A549 (cell line): ENCODE measurements at regions of chr1 and their contacts with region 1.

Region 1: GRCh38 chr1:67500413-67500959 is 70.3 kb upstream of the SERBP1 start:
- DNase-seq: peak; percentile 81
- ATAC-seq: peak; percentile 99 to 100
- H3K4me3 ChIP-seq: no peak overlapping the region
- H3K27ac ChIP-seq: no peak overlapping the region; a peak in 1 of 6 replicates
- H3K4me1 ChIP-seq: no peaks in the 10 kb centered on the region
- CTCF ChIP-seq: peak; percentile 85
- EP300 ChIP-seq: no peak
- POLR2A ChIP-seq: no peak
- RAD21 ChIP-seq: peak; percentile 92 to 95

Region 2: GRCh38 chr1:67214420-67215174 is 285.9 kb before region 1 on chr1:
- CTCF ChIA-PET with region 1: interaction called, 49 read pairs
- POLR2A ChIA-PET with region 1: no interaction called
- DNase-seq: peak in 1 of 2 experiments; percentile 24
- ATAC-seq: peak in 1 of 2 experiments; percentile 75; a peak in 3 of 6 replicates
- H3K4me3 ChIP-seq: no peak overlapping the region
- H3K27ac ChIP-seq: no peak overlapping the region
- H3K4me1 ChIP-seq: no peaks in the 10 kb centered on the region
- CTCF ChIP-seq: peak; percentile 48
- EP300 ChIP-seq: no peak
- POLR2A ChIP-seq: no peak
- RAD21 ChIP-seq: 0 out of 5 replicates have a peak, but pooled peaks of 1 of the 2 experiments have one; percentile 15

Region 3: DNA sequence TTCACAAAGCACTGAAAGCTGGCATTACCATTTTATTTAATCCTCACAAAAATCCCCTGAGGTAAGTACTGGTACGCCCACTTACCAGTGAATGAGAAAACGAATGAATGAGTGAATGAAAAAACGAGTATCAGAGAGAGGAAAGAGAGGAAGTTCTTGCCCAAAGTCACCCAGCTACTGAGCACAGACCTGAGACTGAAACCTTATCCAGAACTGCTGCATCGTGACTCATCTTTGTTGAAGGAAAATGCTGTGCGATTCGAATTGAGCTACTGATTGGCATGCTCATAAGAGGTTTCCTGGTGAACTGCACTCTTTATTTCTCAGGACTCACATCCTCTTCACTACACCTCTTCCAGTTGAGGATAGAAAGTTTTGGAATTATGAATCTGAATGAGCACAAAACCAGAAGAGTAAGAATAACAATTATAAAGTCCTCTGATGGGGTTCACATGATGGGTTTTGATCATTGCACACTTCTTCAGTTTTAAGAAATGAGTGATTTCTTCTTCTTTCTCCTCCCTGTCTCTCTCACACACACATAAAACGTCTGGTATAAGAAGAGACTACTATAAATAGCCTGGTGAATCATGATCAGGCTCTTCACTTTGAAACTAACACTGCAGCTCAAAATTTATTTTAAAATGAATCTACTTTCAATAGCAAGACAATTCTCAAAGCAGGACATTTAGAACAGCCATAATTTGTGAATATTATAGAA is 160.7 kb before region 1 on chr1:
- CTCF ChIA-PET with region 1: interaction called, 36 read pairs
- POLR2A ChIA-PET with region 1: no interaction called
- DNase-seq: peak in 1 of 2 experiments; percentile 3
- ATAC-seq: peak; percentile 39 to 40; a peak in 2 of 6 replicates
- H3K4me3 ChIP-seq: no peak overlapping the region
- H3K27ac ChIP-seq: no peak overlapping the region
- H3K4me1 ChIP-seq: no peaks in the 10 kb centered on the region
- CTCF ChIP-seq: no peak
- EP300 ChIP-seq: no peak
- POLR2A ChIP-seq: no peak
- RAD21 ChIP-seq: no peak

Region 4: DNA sequence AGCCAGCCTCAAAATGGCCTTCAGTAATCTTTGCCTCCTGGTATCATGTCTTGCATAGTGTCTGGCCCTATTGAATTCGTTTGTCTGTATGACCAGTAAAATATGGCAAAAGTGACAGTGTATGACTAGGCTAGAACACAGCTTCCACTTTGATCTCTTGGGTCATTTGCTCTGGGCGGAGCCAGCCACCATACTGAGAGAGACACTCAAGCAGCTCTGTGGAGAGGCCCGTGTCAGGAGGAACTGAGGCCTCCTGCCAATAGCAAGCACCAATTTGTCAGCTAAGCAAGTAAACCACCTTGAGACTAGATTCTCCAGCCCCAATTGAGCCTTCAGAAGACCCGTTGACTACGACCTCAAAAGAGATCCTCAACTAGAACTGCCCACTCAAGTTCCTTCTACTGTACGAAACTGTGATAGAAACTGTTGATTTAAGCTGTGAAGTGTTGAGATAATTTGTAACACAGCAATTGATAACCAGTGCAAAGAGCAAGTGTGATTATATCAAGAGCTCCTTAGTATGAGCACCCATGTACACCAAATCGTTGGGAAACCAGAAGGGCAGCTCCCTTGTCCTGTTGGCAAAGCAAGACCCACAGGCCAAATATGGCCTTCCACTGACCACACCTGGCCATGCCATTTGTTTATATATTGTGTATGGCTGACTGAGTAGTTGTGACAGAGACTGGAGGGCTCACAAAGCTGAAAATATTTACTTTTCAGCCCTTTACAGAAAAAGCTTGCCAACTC is 17.6 kb before region 1 on chr1:
- CTCF ChIA-PET with region 1: interaction called, 44 read pairs
- POLR2A ChIA-PET with region 1: no interaction called
- DNase-seq: no peak
- ATAC-seq: no peak
- H3K4me3 ChIP-seq: no peak overlapping the region
- H3K27ac ChIP-seq: no peak overlapping the region
- H3K4me1 ChIP-seq: no peaks in the 10 kb centered on the region
- CTCF ChIP-seq: no peak
- EP300 ChIP-seq: no peak
- POLR2A ChIP-seq: no peak
- RAD21 ChIP-seq: no peak

Region 5: GRCh38 chr1:67515324-67516080 is 15.0 kb after region 1 on chr1:
- CTCF ChIA-PET with region 1: interaction called, 19 read pairs
- POLR2A ChIA-PET with region 1: no interaction called
- DNase-seq: no peak
- ATAC-seq: no peak
- H3K4me3 ChIP-seq: no peak overlapping the region
- H3K27ac ChIP-seq: no peak overlapping the region
- H3K4me1 ChIP-seq: no peaks in the 10 kb centered on the region
- CTCF ChIP-seq: no peak
- EP300 ChIP-seq: no peak
- POLR2A ChIP-seq: no peak
- RAD21 ChIP-seq: no peak